ENCODE measurements at regions of chr11 and their contacts with region 1.

Region 1: DNA sequence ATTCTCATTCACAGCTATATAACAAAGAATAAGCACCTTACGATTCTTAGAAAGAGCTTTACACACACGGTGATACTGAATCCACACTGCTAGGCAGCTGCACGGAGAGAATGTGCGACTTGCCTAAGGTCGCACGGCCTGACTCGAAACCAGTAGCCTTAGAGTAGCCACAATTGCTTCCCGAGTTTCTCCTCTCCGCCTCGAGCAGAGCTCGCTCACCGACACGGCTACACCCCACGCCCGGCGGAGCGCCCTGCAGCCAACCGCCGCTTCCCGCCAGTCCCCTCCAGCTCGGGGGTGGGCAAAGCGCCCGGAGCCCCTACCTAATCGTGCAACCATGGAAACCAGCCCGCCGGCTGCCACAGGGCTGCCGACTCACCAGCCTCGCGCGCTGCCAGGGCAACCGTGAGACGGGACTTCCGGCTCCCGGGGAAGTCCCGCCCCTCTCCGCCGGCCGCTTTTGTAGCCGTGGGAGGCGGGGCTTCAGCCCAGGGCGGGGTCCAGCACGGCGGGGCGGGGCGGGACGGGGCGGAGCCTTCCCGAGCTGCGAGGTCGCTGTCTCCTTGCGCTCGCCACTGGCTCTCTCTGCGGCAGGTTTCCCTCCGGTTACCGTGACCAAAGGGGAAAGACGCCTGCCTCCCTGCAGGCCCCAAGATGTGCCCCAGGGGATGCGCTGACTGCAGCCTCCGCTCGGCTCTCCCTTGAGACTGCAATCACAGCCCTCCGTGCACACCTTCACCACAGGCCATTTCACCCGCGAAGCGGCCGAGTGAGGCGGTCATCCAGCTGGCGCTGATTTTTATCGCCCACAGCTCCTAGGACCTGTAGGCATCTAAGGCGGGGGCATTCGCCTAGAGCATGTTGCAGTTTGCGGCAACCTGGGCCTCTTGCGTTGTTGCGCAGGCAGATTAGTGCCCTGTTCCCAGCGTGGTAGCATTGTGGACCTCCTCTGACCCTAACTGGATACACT is 1.1 kb downstream of the BSCL2 start:
- DNase-seq: peak; percentile 95 to 98 (median 98)
- H3K4me3 ChIP-seq: peak overlapping the region; percentile 33 to 90 (median 76)
- H3K27ac ChIP-seq: peak overlapping the region; percentile 89 to 92
- H3K4me1 ChIP-seq: peaks cover 8 to 56% (median 44%) of the 10 kb centered on the region in 4 experiments
- H3K27me3 ChIP-seq: no peaks in the 10 kb centered on the region

Region 2: GRCh38 chr11:62678770-62679696 is 27.1 kb before region 1 on chr11 and contains the start of gene UBXN1:
- CTCF ChIA-PET with region 1: interaction called, 18 read pairs
- POLR2A ChIA-PET with region 1: interaction called, 6 read pairs
- DNase-seq: peak; percentile 90 to 92 (median 90)
- H3K4me3 ChIP-seq: peak within 1 kb of the TSS; percentile 71 to 96 (median 90)
- H3K27ac ChIP-seq: peak within 1 kb of the TSS; percentile 93 to 96
- H3K4me1 ChIP-seq: peaks cover 2 to 26% (median 16%) of the 10 kb centered on the region in 4 experiments
- H3K27me3 ChIP-seq: no peaks in the 10 kb centered on the region

Region 3: DNA sequence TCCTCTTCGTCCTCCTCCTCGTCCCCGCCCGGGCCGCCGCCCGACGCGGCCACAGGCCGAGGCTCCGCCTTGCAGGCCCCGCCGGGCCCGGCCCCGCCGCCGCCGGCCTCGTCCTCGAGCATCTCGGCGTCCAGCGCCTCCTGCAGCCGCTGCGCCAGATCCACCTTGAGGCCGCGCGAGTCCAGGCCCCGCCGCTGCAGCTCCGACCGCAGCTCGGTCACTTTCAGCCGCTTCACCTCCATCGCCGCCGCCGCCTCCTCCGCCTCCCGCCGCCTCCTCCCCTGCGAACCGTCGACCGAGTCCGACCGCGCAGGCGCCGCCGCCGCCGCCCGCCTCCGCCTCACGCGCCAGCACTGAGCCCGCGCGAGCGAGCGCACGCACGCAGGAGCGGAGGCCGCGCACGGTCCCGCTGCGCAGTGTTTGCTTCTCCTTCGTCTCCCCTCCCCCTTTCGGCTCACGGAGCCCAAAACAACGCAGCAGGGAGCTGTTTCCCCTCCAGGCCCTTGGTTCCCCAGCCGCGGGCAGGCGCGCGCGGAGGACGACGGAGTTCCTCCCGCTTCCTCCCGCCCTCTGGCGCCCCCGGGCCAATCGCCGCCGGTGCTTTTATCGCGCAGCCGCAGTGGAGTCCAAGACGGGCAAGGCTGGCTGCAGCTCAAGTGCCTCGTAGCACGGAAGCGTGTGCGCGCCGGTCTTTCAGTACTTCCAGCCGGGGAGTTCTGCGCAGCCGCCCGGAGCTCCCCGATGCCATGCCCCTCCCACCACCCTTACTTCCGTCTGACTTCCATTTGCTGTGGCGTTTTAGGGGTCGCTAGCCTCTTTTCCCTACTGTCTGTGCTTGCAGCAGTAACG is 21.0 kb after region 1 on chr11 and contains the start of gene HNRNPUL2:
- CTCF ChIA-PET with region 1: interaction called, 8 read pairs
- POLR2A ChIA-PET with region 1: interaction called, 22 read pairs
- DNase-seq: peak; percentile 100
- H3K4me3 ChIP-seq: peak within 1 kb of the TSS; percentile 83 to 100 (median 89)
- H3K27ac ChIP-seq: peak within 1 kb of the TSS; percentile 84 to 95
- H3K4me1 ChIP-seq: peaks cover 23 to 47% (median 41%) of the 10 kb centered on the region in 4 experiments
- H3K27me3 ChIP-seq: no peaks in the 10 kb centered on the region

Region 4: DNA sequence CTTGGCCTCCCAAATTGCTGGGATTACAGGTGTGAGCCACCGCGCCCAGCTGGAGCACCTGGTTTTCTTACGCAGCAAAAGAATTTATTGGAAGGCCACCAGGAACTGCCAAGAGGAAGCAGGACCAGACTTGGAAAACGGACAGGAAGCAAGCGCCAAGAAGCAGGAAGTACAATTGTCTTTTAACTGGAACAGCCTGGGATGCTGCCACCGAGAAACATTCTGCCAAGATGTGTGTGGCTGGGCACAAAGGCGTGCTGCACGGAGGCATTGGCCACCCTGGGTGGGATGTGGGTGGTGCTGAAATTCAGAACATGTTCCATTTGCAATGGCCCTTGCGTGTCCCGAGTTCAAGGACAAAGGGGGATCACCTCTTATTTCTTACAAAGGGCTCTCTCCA is 189.9 kb after region 1 on chr11:
- CTCF ChIA-PET with region 1: no interaction called
- POLR2A ChIA-PET with region 1: no interaction called
- DNase-seq: no peak
- H3K4me3 ChIP-seq: no peak overlapping the region
- H3K27ac ChIP-seq: no peak overlapping the region
- H3K4me1 ChIP-seq: no peaks in the 10 kb centered on the region
- H3K27me3 ChIP-seq: peaks cover 0 to 3% (median 0%) of the 10 kb centered on the region in 5 experiments

Region 5: GRCh38 chr11:63321723-63322122 is 615.6 kb after region 1 on chr11:
- CTCF ChIA-PET with region 1: no interaction called
- POLR2A ChIA-PET with region 1: no interaction called
- DNase-seq: no peak
- H3K4me3 ChIP-seq: no peak overlapping the region
- H3K27ac ChIP-seq: no peak overlapping the region
- H3K4me1 ChIP-seq: no peaks in the 10 kb centered on the region
- H3K27me3 ChIP-seq: peaks cover 0 to 3% (median 0%) of the 10 kb centered on the region in 5 experiments